Activated CD8-positive, alpha-beta memory T cell treated with anti-CD3 and anti-CD28 coated beads, Interleukin-2, amount 10 ng/mL, durations not matched to agents 7 days and 5 days (primary cell): ENCODE measurements at regions of chr2 and their contacts with region 1.

Region 1: GRCh38 chr2:201071479-201072200 is at the starts of genes HYCC2 and NDUFB3:
- DNase-seq: peak; percentile 97
- ATAC-seq: peak; percentile 98
- H3K4me3 Mint-ChIP-seq: peak within 1 kb of the TSS; percentile 91
- H3K27ac Mint-ChIP-seq: peak within 1 kb of the TSS; percentile 88
- H3K4me1 Mint-ChIP-seq: peaks cover 55% of the 10 kb centered on the region
- H3K27me3 Mint-ChIP-seq: no peaks in the 10 kb centered on the region
- total RNA-seq, gene HYCC2: 33.4 to 37.2 TPM
- total RNA-seq, gene NDUFB3: 116 to 141 TPM

Region 2: DNA sequence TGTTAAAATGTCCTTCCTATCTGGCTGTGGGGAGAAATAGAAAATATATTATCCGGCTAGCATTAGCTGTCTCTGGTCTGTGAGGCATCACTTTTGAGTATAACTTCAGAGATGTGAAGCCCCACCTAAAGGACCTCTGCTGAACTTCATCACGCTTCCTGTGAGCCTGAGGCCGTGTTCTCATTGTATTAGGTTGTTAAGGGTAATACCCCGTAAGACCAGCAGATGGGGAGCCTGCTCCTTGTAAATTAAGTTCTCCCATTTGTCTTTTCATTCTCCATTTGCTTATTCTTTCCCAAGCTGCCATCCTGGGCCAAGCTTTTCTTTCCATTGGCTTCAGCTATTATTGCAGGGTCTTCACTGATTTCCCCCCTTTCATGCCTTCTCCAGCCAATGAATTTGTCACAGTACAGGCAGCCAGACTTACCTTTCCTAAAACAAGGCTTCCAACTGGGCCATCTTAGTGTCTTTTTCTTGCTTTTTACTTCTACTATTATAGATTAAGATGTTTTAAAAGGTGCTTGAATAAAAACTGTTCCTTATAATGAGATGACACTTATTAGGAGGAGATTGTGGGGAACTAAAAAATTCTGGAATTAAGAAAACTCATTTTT is 170.1 kb before region 1 on chr2:
- CTCF ChIA-PET with region 1: interaction called, 110 read pairs
- DNase-seq: peak; percentile 89
- ATAC-seq: peak; percentile 100
- H3K4me3 Mint-ChIP-seq: no peak overlapping the region
- H3K27ac Mint-ChIP-seq: peak overlapping the region; percentile 72
- H3K4me1 Mint-ChIP-seq: peaks cover 25% of the 10 kb centered on the region
- H3K27me3 Mint-ChIP-seq: no peaks in the 10 kb centered on the region

Region 3: DNA sequence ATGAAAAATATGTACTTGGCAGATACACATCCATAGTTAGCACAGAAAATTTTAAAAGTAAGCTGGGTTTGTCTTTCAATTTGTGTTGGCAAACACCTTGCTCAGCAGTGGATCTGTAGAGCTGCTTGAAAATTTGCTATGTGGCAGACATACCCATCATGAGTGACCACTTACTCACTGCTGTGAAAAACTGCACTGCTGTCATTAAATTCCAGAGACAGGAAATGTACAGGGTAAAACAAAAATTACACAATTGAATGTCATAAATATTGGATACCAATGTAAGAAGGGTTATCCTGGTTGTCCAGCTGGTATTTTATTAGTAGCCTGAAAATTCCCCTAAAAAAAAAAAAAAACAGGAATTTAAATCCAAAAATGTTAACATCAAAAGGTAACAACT is 158.0 kb before region 1 on chr2:
- CTCF ChIA-PET with region 1: interaction called, 11 read pairs
- DNase-seq: no peak
- ATAC-seq: no peak
- H3K4me3 Mint-ChIP-seq: no peak overlapping the region
- H3K27ac Mint-ChIP-seq: no peak overlapping the region
- H3K4me1 Mint-ChIP-seq: peaks cover 4% of the 10 kb centered on the region
- H3K27me3 Mint-ChIP-seq: no peaks in the 10 kb centered on the region

Region 4: GRCh38 chr2:200929334-200930249 is 142.0 kb before region 1 on chr2:
- CTCF ChIA-PET with region 1: interaction called, 10 read pairs
- DNase-seq: no peak
- ATAC-seq: no peak
- H3K4me3 Mint-ChIP-seq: no peak overlapping the region
- H3K27ac Mint-ChIP-seq: peak overlapping the region; percentile 19
- H3K4me1 Mint-ChIP-seq: peaks cover 11% of the 10 kb centered on the region
- H3K27me3 Mint-ChIP-seq: no peaks in the 10 kb centered on the region

Region 5: GRCh38 chr2:200963124-200963917 is 108.3 kb before region 1 on chr2 and contains the start of gene ORC2:
- CTCF ChIA-PET with region 1: interaction called, 73 read pairs
- DNase-seq: peak; percentile 94
- ATAC-seq: peak; percentile 96
- H3K4me3 Mint-ChIP-seq: peak within 1 kb of the TSS; percentile 92
- H3K27ac Mint-ChIP-seq: peak within 1 kb of the TSS; percentile 96
- H3K4me1 Mint-ChIP-seq: peaks cover 65% of the 10 kb centered on the region
- H3K27me3 Mint-ChIP-seq: no peaks in the 10 kb centered on the region
- total RNA-seq, gene ORC2: 54.8 to 57.8 TPM

Region 6: GRCh38 chr2:201158111-201158929 is 86.7 kb after region 1 on chr2:
- CTCF ChIA-PET with region 1: interaction called, 13 read pairs
- DNase-seq: peak; percentile 74
- ATAC-seq: peak; percentile 84
- H3K4me3 Mint-ChIP-seq: no peak overlapping the region
- H3K27ac Mint-ChIP-seq: peak overlapping the region; percentile 84
- H3K4me1 Mint-ChIP-seq: peaks cover 14% of the 10 kb centered on the region
- H3K27me3 Mint-ChIP-seq: no peaks in the 10 kb centered on the region

Region 7: DNA sequence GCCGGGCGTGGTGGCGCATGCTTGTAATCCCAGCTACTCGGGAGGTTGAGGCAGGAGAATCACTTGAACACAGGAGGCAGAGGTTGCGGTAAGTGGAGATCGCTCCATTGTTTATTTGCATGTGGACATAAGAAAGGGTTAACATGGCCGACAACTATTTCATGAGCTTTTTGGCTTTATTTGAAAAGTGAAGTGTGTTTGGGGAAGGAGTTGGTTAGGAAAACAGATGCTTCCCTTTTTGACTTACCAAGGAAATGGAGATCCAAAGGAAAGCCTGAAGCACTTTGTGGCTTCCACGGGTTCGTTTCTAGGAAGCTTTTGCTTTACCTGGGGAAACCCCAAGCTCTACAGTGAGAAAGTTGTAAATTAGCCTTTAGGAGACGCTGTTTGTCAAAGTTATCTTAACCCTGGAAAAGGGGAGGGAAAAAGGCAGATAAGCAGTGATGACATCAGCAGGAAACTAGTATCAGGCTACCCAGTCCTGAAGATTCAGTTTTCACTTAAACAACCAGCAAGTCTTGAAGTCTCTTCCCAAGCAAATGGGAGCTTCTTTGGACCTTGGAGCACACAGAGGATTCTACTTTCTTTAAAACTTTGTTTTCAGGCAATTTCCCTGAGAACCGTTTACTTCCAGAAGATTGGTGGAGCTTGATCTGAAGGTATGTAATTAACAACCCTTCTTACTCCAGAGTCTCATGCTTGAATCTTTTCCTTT is 111.2 kb after region 1 on chr2 and contains the start of gene CASP10:
- CTCF ChIA-PET with region 1: interaction called, 10 read pairs
- DNase-seq: peak; percentile 48
- ATAC-seq: peak; percentile 82
- H3K4me3 Mint-ChIP-seq: peak within 1 kb of the TSS; percentile 94
- H3K27ac Mint-ChIP-seq: peak within 1 kb of the TSS; percentile 88
- H3K4me1 Mint-ChIP-seq: peaks cover 55% of the 10 kb centered on the region
- H3K27me3 Mint-ChIP-seq: no peaks in the 10 kb centered on the region
- total RNA-seq, gene CASP10: 26.6 to 37.4 TPM